Heart right ventricle (tissue), 16 donors: ENCODE measurements at regions of chr7 and their contacts with region 1.

Region 1: DNA sequence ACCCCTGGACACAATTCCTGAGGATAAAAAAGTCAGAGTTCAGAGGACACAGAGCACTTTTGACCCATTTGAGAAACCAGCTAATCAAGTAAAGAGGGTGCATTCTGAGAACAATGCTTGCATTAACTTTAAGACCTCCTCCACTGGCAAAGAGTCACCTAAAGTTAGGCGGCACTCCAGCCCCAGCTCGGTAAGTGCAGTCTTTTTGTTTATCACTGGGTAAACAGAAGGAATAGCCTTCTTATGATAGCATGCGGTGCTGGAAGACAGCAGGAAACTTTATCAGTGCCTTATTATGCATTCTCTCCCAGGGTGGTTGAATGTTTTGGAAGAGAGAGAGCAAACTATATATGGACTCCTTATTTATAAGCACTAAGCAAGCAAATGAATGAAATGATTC is 130.5 kb downstream of the CDK14 start:
- DNase-seq: no peak
- ATAC-seq: peak in 7 of 8 donors; percentile 29 to 88 (median 78)
- H3K4me3 ChIP-seq: no peak overlapping the region
- H3K27ac ChIP-seq: peak overlapping the region in 8 of 10 donors; percentile 7 to 61 (median 40)
- H3K4me1 ChIP-seq: peaks cover 0 to 37% (median 23%) of the 10 kb centered on the region in 9 donors
- H3K27me3 ChIP-seq: no peaks in the 10 kb centered on the region
- CTCF ChIP-seq: no peak

Region 2: GRCh38 chr7:90661290-90662151 is 65.1 kb before region 1 on chr7:
- intact Hi-C with region 1: loop called in 1 of 10 experiments (anchors 5 kb)
- DNase-seq: peak in 1 of 2 donors; percentile 28
- ATAC-seq: peak; percentile 56 to 95 (median 93)
- H3K4me3 ChIP-seq: no peak overlapping the region
- H3K27ac ChIP-seq: peak overlapping the region; percentile 61 to 83 (median 79)
- H3K4me1 ChIP-seq: peaks cover 3 to 49% (median 26%) of the 10 kb centered on the region in 9 donors
- H3K27me3 ChIP-seq: no peaks in the 10 kb centered on the region
- CTCF ChIP-seq: no peak

Region 3: DNA sequence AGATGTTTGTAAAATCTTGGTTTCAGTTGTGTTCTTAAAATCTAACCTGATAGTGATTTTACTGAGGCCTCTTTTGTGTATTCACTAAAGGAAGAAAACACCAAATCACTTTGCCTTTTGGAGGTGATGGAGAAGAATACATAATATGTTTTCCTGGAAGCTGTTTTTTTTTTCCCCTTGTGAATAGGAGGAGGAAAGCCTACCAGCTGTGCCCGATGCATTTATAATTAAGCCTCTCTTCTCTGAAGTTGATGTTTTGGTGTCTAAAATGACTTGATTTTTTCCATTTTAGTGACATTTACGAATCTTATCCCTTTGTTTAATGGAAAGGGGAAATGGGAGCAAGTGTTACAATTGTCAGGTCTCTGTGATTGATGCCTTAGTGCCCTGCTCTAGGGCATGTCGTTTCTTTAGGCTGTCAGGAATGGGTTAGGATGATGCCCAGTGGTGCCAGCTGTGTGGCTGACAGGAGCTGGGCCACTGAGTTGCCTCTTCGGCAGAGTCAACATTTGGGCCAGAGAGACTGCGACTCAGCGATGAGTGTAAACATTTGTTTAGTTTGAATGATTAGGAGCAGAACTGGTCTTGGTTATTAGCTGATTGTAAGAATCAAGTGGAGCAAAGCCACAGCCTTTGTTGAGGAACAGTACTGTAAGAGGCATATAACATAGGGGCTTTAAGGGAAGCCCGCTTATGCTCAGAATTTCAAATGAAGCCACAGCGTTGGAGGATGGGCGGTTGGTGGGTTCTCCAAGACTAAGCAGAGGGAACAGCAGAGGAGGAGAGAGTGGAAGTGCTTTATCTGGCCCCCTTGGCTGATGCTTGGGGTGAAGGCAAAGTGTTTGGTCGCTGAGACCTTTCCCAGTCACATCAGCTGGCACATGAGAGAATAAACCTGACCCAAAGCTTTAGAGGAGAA is 48.9 kb before region 1 on chr7:
- intact Hi-C with region 1: no loop called
- DNase-seq: no peak
- ATAC-seq: no peak
- H3K4me3 ChIP-seq: no peak overlapping the region
- H3K27ac ChIP-seq: peak overlapping the region in 1 of 10 donors; percentile 9
- H3K4me1 ChIP-seq: peaks cover 0 to 34% (median 9%) of the 10 kb centered on the region in 9 donors
- H3K27me3 ChIP-seq: no peaks in the 10 kb centered on the region
- CTCF ChIP-seq: no peak

Region 4: GRCh38 chr7:90777465-90777864 is 50.8 kb after region 1 on chr7:
- intact Hi-C with region 1: no loop called
- DNase-seq: no peak
- ATAC-seq: peak in 2 of 8 donors; percentile 59 to 63
- H3K4me3 ChIP-seq: no peak overlapping the region
- H3K27ac ChIP-seq: no peak overlapping the region
- H3K4me1 ChIP-seq: peaks cover 0 to 15% (median 5%) of the 10 kb centered on the region in 9 donors
- H3K27me3 ChIP-seq: no peaks in the 10 kb centered on the region
- CTCF ChIP-seq: no peak